GM10248 (cell line): ENCODE measurements at regions of chr4 and their contacts with region 1.

Region 1: GRCh38 chr4:155769090-155769489 is 10.3 kb downstream of the GUCY1B1 start:
- DNase-seq: no peak
- CTCF ChIP-seq: no peak

Region 2: GRCh38 chr4:155758481-155759404 is 10.3 kb before region 1 on chr4 and contains the start of gene GUCY1B1:
- CTCF ChIA-PET with region 1: interaction called, 28 read pairs
- POLR2A ChIA-PET with region 1: no interaction called
- DNase-seq: peak; percentile 97
- CTCF ChIP-seq: no peak